Heart left ventricle (tissue), 16 donors: ENCODE measurements at regions of chr4 and their contacts with region 1.

Region 1: GRCh38 chr4:2468445-2469192 is at the start of gene RNF4:
- DNase-seq: peak; percentile 97
- ATAC-seq: peak; percentile 95 to 97 (median 96)
- H3K4me3 ChIP-seq: peak within 1 kb of the TSS; percentile 71 to 100 (median 91)
- H3K27ac ChIP-seq: peak within 1 kb of the TSS; percentile 86 to 98 (median 94)
- H3K4me1 ChIP-seq: peaks cover 6 to 37% (median 24%) of the 10 kb centered on the region in 12 donors
- H3K27me3 ChIP-seq: no peaks in the 10 kb centered on the region
- CTCF ChIP-seq: peak in 1 of 12 donors; percentile 6
- POLR2A ChIP-seq: peak in 1 of 2 donors; percentile 66
- total RNA-seq, gene RNF4: 24.3 to 45.7 (median 30.8) TPM

Region 2: DNA sequence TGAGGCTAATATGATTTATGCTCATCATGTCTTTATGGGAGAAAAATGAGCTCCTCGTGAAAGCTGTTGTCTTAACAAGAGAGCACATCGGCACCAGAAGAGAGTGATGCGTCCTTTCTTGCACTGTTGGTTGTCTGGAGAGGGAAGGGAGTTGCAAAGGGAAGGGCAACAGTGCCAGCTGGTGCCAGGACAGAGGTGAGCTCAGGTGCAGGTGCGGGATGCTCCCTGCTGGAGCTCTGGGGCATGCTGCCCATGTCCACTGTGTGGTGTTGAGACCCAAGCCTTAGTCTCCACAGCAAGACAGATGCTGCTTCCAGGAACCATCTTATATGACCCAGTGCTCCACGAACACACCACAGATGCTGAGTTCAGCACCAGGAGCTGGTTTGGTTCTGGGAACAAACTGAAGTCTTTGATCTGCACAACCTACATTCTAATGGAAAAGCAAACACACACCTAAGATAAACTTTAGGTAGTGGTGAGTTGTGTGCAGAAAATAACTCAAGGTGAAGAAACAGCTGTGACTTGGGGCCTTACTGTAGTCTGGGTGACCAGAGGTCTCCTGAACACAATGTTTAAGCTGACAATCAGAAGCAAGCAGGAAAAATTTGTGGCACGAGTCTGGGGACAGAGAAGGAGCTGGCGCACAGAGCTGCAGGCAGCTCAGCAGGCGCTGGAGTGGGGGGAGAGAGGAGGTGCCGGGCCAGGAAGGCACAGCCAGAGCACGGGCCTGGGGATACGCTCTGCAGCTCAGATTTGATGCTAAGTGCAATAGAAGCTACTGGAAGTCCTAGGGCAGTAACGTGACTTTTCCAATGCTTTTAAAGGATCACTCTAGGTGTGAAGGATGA is 299.9 kb before region 1 on chr4:
- intact Hi-C with region 1: no loop called
- DNase-seq: no peak
- ATAC-seq: no peak
- H3K4me3 ChIP-seq: no peak overlapping the region
- H3K27ac ChIP-seq: no peak overlapping the region
- H3K4me1 ChIP-seq: peaks cover 0 to 10% (median 0%) of the 10 kb centered on the region in 12 donors
- H3K27me3 ChIP-seq: no peaks in the 10 kb centered on the region
- CTCF ChIP-seq: no peak
- POLR2A ChIP-seq: no peak

Region 3: GRCh38 chr4:2484993-2485392 is 16.4 kb after region 1 on chr4:
- intact Hi-C with region 1: loop called in 1 of 10 experiments (anchors 2 kb)
- DNase-seq: peak; percentile 85 to 89 (median 87)
- ATAC-seq: peak; percentile 68 to 91 (median 84)
- H3K4me3 ChIP-seq: peak overlapping the region in 3 of 12 donors; percentile 4 to 24 (median 19)
- H3K27ac ChIP-seq: peak overlapping the region; percentile 39 to 90 (median 68)
- H3K4me1 ChIP-seq: peaks cover 20 to 95% (median 74%) of the 10 kb centered on the region in 12 donors
- H3K27me3 ChIP-seq: no peaks in the 10 kb centered on the region
- CTCF ChIP-seq: no peak
- POLR2A ChIP-seq: no peak

Region 4: GRCh38 chr4:2624782-2625530 is 156.3 kb after region 1 on chr4:
- intact Hi-C with region 1: loop called in 2 of 10 experiments (anchors 5 to 10 kb)
- DNase-seq: no peak
- ATAC-seq: no peak
- H3K4me3 ChIP-seq: no peak overlapping the region
- H3K27ac ChIP-seq: no peak overlapping the region
- H3K4me1 ChIP-seq: peaks cover 0 to 47% (median 8%) of the 10 kb centered on the region in 12 donors
- H3K27me3 ChIP-seq: no peaks in the 10 kb centered on the region
- CTCF ChIP-seq: no peak
- POLR2A ChIP-seq: no peak